HCT116 (cell line): ENCODE measurements at regions of chr5 and their contacts with region 1.

Region 1: GRCh38 chr5:99104538-99105132 is 175.8 kb upstream of the CHD1 start:
- DNase-seq: peak; percentile 28
- ATAC-seq: no peak
- H3K4me3 ChIP-seq: no peak overlapping the region
- H3K27ac ChIP-seq: no peak overlapping the region
- H3K4me1 ChIP-seq: no peaks in the 10 kb centered on the region
- H3K27me3 ChIP-seq: 0 out of 2 replicates have a peak, but pooled peaks cover 6% of the 10 kb centered on the region
- CTCF ChIP-seq: peak; percentile 35 to 51 (median 41); a peak in 4 of 6 replicates
- POLR2A ChIP-seq: no peak
- RAD21 ChIP-seq: peak; percentile 71

Region 2: GRCh38 chr5:99045871-99046270 is 58.8 kb before region 1 on chr5:
- CTCF ChIA-PET with region 1: no interaction called
- POLR2A ChIA-PET with region 1: no interaction called
- RAD21 ChIA-PET with region 1: no interaction called
- intact Hi-C with region 1: no loop called
- DNase-seq: no peak
- ATAC-seq: no peak
- H3K4me3 ChIP-seq: no peak overlapping the region
- H3K27ac ChIP-seq: no peak overlapping the region
- H3K4me1 ChIP-seq: no peaks in the 10 kb centered on the region
- H3K27me3 ChIP-seq: no peaks in the 10 kb centered on the region
- CTCF ChIP-seq: no peak
- POLR2A ChIP-seq: no peak
- RAD21 ChIP-seq: no peak

Region 3: GRCh38 chr5:100306000-100306399 is 1201.4 kb after region 1 on chr5:
- CTCF ChIA-PET with region 1: no interaction called
- POLR2A ChIA-PET with region 1: no interaction called
- RAD21 ChIA-PET with region 1: no interaction called
- intact Hi-C with region 1: loop called (anchors 5 kb)
- DNase-seq: no peak
- ATAC-seq: no peak
- H3K4me3 ChIP-seq: no peak overlapping the region
- H3K27ac ChIP-seq: no peak overlapping the region
- H3K4me1 ChIP-seq: no peaks in the 10 kb centered on the region
- H3K27me3 ChIP-seq: no peaks in the 10 kb centered on the region
- CTCF ChIP-seq: no peak
- POLR2A ChIP-seq: no peak
- RAD21 ChIP-seq: no peak

Region 4: GRCh38 chr5:100311807-100312206 is 1207.2 kb after region 1 on chr5:
- CTCF ChIA-PET with region 1: interaction called, 19 read pairs
- POLR2A ChIA-PET with region 1: no interaction called
- RAD21 ChIA-PET with region 1: interaction called in 1 of 2 experiments, 4 read pairs
- intact Hi-C with region 1: loop called (anchors 5 kb)
- DNase-seq: no peak
- ATAC-seq: no peak
- H3K4me3 ChIP-seq: no peak overlapping the region
- H3K27ac ChIP-seq: no peak overlapping the region
- H3K4me1 ChIP-seq: no peaks in the 10 kb centered on the region
- H3K27me3 ChIP-seq: no peaks in the 10 kb centered on the region
- CTCF ChIP-seq: peak in 1 of 3 experiments; percentile 16; a peak in 2 of 6 replicates
- POLR2A ChIP-seq: no peak
- RAD21 ChIP-seq: peak; percentile 37; the same call in 1 of the 2 replicates